ENCODE measurements at regions of chr6 and their contacts with region 1.

Region 1: DNA sequence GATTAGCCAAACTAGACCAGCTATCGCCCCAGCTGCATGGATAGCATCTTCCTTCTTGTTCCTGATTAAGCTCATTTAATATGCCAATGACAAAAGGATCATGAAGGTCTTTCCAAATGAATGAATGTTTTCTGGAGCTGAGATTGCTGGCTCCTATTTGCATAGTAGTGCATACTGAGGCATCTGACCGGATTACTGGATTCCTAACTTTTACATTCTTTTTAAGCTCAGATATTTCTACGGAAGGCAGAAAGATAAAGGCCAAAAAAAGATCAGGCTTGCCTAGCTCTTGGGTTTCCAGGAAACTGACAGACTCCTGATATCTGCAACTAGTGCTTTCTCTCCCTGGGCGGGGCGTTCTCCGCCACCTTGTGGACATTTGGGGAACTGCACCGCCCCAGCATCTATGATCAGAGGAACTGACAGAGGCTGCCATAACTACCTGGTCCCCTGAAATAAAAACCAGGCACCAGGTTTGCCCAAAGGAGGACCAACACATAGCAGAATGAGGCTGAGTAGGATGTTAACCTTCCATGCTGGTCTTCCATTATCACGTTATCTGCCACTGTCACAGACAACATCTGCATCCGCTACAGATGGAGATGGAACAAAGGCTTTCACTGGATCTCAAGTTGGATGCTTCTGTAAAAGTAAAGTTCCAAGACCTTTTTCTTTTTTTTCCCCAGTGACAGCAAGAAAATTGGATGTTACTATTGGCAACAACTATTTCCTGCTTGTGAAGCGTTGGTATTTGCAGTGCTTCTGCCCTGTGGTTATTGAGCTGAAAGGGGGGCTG is 33.2 kb downstream of the NT5E start:
- DNase-seq: peak in 41 of 42 donors; percentile 55 to 91 (median 81)

Region 2: GRCh38 chr6:85354761-85355618 is 128.1 kb before region 1 on chr6:
- intact Hi-C with region 1: loop called (anchors 2 kb)
- DNase-seq: peak; percentile 31 to 86 (median 72)

Measured in head of caudate nucleus (tissue), 42 donors.